Naive thymus-derived CD4-positive, alpha-beta T cell (primary cell): ENCODE measurements at regions of chr5 and their contacts with region 1.

Region 1: DNA sequence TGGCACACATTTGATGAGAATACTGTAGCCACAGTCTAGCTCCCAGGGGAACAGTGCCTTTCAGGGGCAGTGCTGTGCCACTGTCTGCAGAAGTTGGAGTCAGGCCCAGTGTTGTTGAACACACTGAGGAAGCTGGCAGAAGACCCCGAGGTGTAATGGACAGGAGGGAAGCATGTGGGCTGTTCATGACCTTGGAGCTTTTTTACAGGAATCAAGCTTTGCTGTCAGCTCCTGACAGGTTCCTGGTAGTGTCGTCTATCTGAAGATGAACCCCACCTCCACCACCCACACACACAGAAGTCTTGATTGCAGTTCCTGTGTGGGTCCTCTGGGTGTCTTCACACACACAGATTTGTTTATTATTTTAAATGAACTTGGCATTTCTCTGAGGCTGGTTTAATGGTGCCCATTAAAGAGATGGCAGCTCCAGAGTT is 40.3 kb upstream of the TNFAIP8 start:
- DNase-seq: peak in 7 of 9 donors; percentile 60 to 78 (median 67)
- ATAC-seq: peak; percentile 93
- H3K4me3 ChIP-seq: peak overlapping the region; percentile 25
- H3K4me3 Mint-ChIP-seq: peak overlapping the region; percentile 27 to 90 (median 60)
- H3K27ac ChIP-seq: peak overlapping the region; percentile 69
- H3K27ac Mint-ChIP-seq: peak overlapping the region; percentile 73 to 98 (median 93)
- H3K4me1 ChIP-seq: peaks cover 72 to 93% of the 10 kb centered on the region in 2 donors
- H3K4me1 Mint-ChIP-seq: peaks cover 68 to 96% (median 92%) of the 10 kb centered on the region in 7 donors
- H3K27me3 ChIP-seq: no peaks in the 10 kb centered on the region
- H3K27me3 Mint-ChIP-seq: no peaks in the 10 kb centered on the region

Region 2: DNA sequence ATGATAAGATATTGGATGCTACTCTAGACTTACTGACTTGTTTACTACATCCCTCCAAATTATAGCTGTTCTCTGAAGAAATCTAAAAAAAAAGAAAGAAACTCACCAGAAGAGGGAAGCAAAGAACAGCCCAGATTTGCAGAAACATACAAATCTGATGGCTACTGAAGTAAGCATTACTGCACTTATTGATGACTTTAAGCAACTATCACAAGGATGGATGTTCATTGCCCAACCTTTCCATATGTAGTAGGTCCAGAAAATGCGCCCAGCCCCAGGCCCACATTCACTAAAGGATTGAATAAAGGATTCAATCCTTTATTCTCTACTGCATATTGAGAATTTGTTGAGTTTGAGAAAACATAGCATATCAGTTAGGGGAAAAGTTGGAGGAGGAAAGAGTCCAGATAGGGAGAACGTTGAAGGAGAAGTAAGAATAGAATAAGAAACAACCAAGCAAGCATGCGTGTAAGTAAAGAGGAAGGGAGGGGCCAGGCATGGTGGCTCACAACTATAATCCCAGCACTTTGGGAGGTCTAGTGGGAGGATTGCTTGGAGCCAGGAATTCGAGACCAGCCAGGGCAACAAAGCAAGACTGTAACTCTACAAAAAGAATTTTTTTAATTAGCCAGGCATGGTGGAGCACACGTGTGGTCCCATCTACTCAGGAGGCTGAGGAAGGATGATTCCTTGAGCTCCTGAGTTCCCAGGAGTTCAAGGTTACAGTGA is 293.4 kb before region 1 on chr5:
- CTCF ChIA-PET with region 1: interaction called, 4 read pairs
- POLR2A ChIA-PET with region 1: no interaction called
- intact Hi-C with region 1: loop called in 1 of 2 experiments (anchors 1 kb)
- DNase-seq: peak in 6 of 9 donors; percentile 12 to 60 (median 54)
- ATAC-seq: peak; percentile 67
- H3K4me3 ChIP-seq: no peak overlapping the region
- H3K4me3 Mint-ChIP-seq: no peak overlapping the region
- H3K27ac ChIP-seq: no peak overlapping the region
- H3K27ac Mint-ChIP-seq: peak overlapping the region in 3 of 9 donors; percentile 46 to 60 (median 47)
- H3K4me1 ChIP-seq: no peaks in the 10 kb centered on the region
- H3K4me1 Mint-ChIP-seq: peaks cover 0 to 6% (median 2%) of the 10 kb centered on the region in 7 donors
- H3K27me3 ChIP-seq: no peaks in the 10 kb centered on the region
- H3K27me3 Mint-ChIP-seq: no peaks in the 10 kb centered on the region

Region 3: GRCh38 chr5:119200795-119201194 is 114.7 kb before region 1 on chr5:
- CTCF ChIA-PET with region 1: no interaction called
- POLR2A ChIA-PET with region 1: no interaction called
- intact Hi-C with region 1: no loop called
- DNase-seq: no peak
- ATAC-seq: no peak
- H3K4me3 ChIP-seq: no peak overlapping the region
- H3K4me3 Mint-ChIP-seq: no peak overlapping the region
- H3K27ac ChIP-seq: no peak overlapping the region
- H3K27ac Mint-ChIP-seq: peak overlapping the region in 2 of 9 donors; percentile 9 to 51
- H3K4me1 ChIP-seq: no peaks in the 10 kb centered on the region
- H3K4me1 Mint-ChIP-seq: peaks cover 0 to 23% (median 15%) of the 10 kb centered on the region in 7 donors
- H3K27me3 ChIP-seq: no peaks in the 10 kb centered on the region
- H3K27me3 Mint-ChIP-seq: no peaks in the 10 kb centered on the region

Region 4: GRCh38 chr5:119218830-119219782 is 96.4 kb before region 1 on chr5:
- CTCF ChIA-PET with region 1: no interaction called
- POLR2A ChIA-PET with region 1: no interaction called
- intact Hi-C with region 1: no loop called
- DNase-seq: no peak
- ATAC-seq: no peak
- H3K4me3 ChIP-seq: no peak overlapping the region
- H3K4me3 Mint-ChIP-seq: no peak overlapping the region
- H3K27ac ChIP-seq: no peak overlapping the region
- H3K27ac Mint-ChIP-seq: no peak overlapping the region
- H3K4me1 ChIP-seq: no peaks in the 10 kb centered on the region
- H3K4me1 Mint-ChIP-seq: peaks cover 0 to 8% (median 0%) of the 10 kb centered on the region in 7 donors
- H3K27me3 ChIP-seq: no peaks in the 10 kb centered on the region
- H3K27me3 Mint-ChIP-seq: no peaks in the 10 kb centered on the region

Region 5: GRCh38 chr5:119274767-119275130 is 40.8 kb before region 1 on chr5:
- CTCF ChIA-PET with region 1: interaction called, 16 read pairs
- POLR2A ChIA-PET with region 1: interaction called, 466 read pairs
- intact Hi-C with region 1: no loop called
- DNase-seq: peak in 1 of 9 donors; percentile 79
- ATAC-seq: peak; percentile 45
- H3K4me3 ChIP-seq: peak overlapping the region; percentile 52
- H3K4me3 Mint-ChIP-seq: peak overlapping the region; percentile 86 to 100 (median 98)
- H3K27ac ChIP-seq: peak overlapping the region; percentile 85
- H3K27ac Mint-ChIP-seq: peak overlapping the region; percentile 73 to 99 (median 95)
- H3K4me1 ChIP-seq: peaks cover 74 to 81% of the 10 kb centered on the region in 2 donors
- H3K4me1 Mint-ChIP-seq: peaks cover 84 to 98% (median 91%) of the 10 kb centered on the region in 7 donors
- H3K27me3 ChIP-seq: no peaks in the 10 kb centered on the region
- H3K27me3 Mint-ChIP-seq: peaks cover 0 to 2% (median 0%) of the 10 kb centered on the region in 5 donors

Region 6: DNA sequence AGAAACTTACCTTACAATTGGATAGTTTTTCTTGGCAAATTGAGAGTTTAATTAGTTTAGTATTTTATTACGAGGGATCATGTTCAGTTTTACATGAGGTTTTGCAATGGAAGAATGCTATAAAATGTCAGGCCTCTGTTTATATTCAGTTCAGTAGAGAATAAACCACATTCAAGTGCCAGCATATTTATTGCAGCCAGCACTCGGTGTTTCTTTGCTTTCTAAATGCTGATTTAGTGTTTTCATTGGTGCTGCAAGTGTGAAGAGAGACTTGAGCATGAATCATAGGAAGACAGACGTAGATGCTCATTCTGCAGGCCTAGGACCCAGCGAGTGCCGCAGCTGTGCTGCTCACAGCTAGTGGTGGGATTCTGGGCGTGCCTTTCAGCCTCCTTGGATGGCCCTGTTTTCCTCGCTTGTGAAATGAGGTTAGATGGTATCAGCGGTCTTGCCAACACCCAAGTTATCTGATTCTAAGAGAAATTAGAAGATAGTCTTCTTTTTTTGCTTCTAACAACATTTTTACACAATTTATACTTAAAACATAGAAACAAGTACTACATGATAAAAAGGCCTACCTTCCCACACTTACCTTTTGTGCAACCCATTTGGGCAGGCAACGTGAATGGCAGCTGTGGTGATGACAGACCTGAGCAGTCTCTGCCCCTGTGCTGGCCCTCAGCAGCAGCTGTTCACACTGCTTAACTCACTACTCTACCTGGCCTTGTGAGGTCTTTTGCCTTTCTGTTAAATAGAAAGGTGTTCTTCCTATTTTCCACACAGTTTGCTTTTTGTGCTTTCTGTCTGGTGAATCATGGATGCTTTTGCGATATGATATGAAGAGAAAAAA is 13.4 kb after region 1 on chr5:
- CTCF ChIA-PET with region 1: interaction called, 47 read pairs
- POLR2A ChIA-PET with region 1: interaction called, 35 read pairs
- intact Hi-C with region 1: loop called (anchors 1 kb)
- DNase-seq: peak in 4 of 9 donors; percentile 30 to 71 (median 37)
- ATAC-seq: peak; percentile 59
- H3K4me3 ChIP-seq: peak overlapping the region; percentile 40
- H3K4me3 Mint-ChIP-seq: peak overlapping the region; percentile 73 to 97 (median 81)
- H3K27ac ChIP-seq: peak overlapping the region; percentile 78
- H3K27ac Mint-ChIP-seq: peak overlapping the region; percentile 84 to 99 (median 95)
- H3K4me1 ChIP-seq: peaks cover 72 to 86% of the 10 kb centered on the region in 2 donors
- H3K4me1 Mint-ChIP-seq: peaks cover 63 to 98% (median 90%) of the 10 kb centered on the region in 7 donors
- H3K27me3 ChIP-seq: no peaks in the 10 kb centered on the region
- H3K27me3 Mint-ChIP-seq: no peaks in the 10 kb centered on the region

Region 7: DNA sequence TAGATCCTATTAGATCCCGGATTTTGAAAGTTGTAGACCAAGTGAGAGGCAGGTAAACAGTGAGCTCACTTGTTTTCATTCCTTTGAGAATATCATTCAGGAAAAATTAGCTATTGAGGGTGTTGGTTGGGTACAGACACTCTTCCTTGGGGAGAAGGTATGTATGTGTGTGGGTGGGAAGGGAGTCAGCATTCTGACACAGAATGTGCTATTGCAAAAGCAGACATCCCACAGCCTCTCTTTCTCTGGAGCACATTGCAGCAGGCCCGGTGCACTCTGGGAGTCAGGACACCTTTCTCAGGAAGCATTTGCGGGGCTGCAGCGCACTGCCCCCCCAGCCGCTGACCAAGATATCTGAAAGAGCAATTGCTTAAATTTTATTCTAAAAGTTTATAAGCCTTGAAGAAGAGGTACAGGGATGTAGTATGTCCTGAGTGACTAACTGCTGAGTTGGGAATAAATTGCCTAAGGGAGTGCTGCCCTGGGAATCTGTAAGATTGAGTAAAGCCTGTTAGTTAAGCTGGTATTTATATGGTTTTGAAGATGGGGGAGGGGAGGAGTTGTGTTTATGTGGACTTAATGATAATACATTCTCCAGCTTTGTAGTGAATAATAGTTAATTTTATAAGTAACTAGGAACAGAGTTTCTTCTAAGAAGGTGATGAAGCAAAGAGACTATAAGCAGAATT is 45.5 kb after region 1 on chr5:
- CTCF ChIA-PET with region 1: interaction called, 10 read pairs
- POLR2A ChIA-PET with region 1: interaction called, 7 read pairs
- intact Hi-C with region 1: loop called in 1 of 2 experiments (anchors 5 kb)
- DNase-seq: no peak
- ATAC-seq: no peak
- H3K4me3 ChIP-seq: no peak overlapping the region
- H3K4me3 Mint-ChIP-seq: peak overlapping the region in 7 of 10 donors; percentile 12 to 98 (median 37)
- H3K27ac ChIP-seq: peak overlapping the region; percentile 55
- H3K27ac Mint-ChIP-seq: peak overlapping the region; percentile 63 to 96 (median 86)
- H3K4me1 ChIP-seq: peaks cover 85 to 89% of the 10 kb centered on the region in 2 donors
- H3K4me1 Mint-ChIP-seq: peaks cover 80 to 98% (median 96%) of the 10 kb centered on the region in 7 donors
- H3K27me3 ChIP-seq: no peaks in the 10 kb centered on the region
- H3K27me3 Mint-ChIP-seq: no peaks in the 10 kb centered on the region

Region 8: DNA sequence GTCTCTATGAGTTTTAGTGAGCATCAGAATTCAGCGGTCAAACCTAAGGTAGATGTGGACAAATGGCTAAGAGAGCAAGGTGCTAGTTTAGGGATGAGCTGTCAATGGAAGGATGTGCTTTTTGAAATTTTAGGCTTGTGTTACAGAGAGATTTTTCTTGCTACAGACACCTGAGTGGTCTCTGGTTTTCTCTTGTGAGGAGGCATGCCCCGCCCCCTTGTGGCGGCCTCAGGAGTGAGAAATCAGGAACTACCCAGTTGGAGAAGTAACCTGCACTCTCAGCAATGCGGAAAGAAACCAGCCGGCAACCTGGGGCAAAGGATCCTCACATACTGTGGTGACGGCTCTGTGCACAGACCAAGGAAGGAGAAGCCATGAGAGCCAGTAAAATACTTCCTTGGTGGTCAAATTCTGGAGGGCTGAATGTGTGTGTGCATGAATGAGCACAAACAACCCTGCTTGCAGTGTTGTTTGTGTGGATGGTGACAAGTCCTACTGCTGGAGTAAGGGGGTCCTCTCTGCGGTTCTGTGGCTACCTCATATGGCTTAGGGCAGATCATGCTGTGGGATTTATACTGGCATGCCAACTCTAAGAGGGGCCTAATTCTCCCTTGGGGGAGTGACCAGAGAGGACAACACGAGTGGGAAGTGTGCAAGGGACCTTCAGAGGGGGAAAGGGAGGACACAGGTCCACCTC is 120.1 kb after region 1 on chr5:
- CTCF ChIA-PET with region 1: interaction called, 3 read pairs
- POLR2A ChIA-PET with region 1: no interaction called
- intact Hi-C with region 1: loop called in 1 of 2 experiments (anchors 1 kb)
- DNase-seq: peak; percentile 49 to 75 (median 64)
- ATAC-seq: peak; percentile 89
- H3K4me3 ChIP-seq: no peak overlapping the region
- H3K4me3 Mint-ChIP-seq: peak overlapping the region in 2 of 10 donors; percentile 9 to 32
- H3K27ac ChIP-seq: no peak overlapping the region
- H3K27ac Mint-ChIP-seq: no peak overlapping the region
- H3K4me1 ChIP-seq: no peaks in the 10 kb centered on the region
- H3K4me1 Mint-ChIP-seq: peaks cover 0 to 25% (median 16%) of the 10 kb centered on the region in 7 donors
- H3K27me3 ChIP-seq: no peaks in the 10 kb centered on the region
- H3K27me3 Mint-ChIP-seq: peaks cover 7 to 30% (median 8%) of the 10 kb centered on the region in 5 donors